ENCODE measurements at regions of chr2 and their contacts with region 1.

Region 1: GRCh38 chr2:71379088-71379487 is 47.5 kb downstream of the ZNF638 start:
- DNase-seq: peak; percentile 81
- ATAC-seq: peak; percentile 87
- H3K4me3 ChIP-seq: no peak overlapping the region
- H3K27ac ChIP-seq: no peak overlapping the region
- H3K4me1 ChIP-seq: peaks cover 7% of the 10 kb centered on the region
- H3K27me3 ChIP-seq: no peaks in the 10 kb centered on the region
- CTCF ChIP-seq: no peak
- POLR2A ChIP-seq: no peak
- RAD21 ChIP-seq: no peak

Region 2: DNA sequence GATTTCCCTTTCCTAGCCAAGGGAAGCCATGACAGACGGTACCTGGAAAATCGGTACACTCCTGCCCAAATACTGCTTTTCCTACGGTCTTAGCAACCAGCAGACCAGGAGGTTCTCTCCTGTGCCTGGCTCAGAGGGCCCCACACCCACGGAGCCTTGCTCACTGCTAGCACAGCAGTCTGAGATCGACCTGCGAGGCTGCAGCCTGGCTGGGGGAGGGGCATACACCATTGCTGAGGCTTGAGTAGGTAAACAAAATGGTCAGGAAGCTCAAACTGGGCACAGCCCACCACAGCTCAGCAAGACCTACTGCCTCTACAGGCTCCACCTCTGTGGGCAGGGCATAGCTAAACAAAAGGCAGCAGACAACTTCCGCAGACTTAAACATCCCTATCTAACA is 536.7 kb before region 1 on chr2:
- CTCF ChIA-PET with region 1: no interaction called
- POLR2A ChIA-PET with region 1: no interaction called
- dilution Hi-C with region 1: no loop called
- in situ Hi-C with region 1: no loop called
- intact Hi-C with region 1: no loop called
- DNase-seq: no peak
- ATAC-seq: no peak
- H3K4me3 ChIP-seq: no peak overlapping the region
- H3K27ac ChIP-seq: no peak overlapping the region
- H3K4me1 ChIP-seq: no peaks in the 10 kb centered on the region
- H3K27me3 ChIP-seq: no peaks in the 10 kb centered on the region; the same call in 1 of the 2 replicates
- CTCF ChIP-seq: no peak
- POLR2A ChIP-seq: no peak
- RAD21 ChIP-seq: no peak

Region 3: DNA sequence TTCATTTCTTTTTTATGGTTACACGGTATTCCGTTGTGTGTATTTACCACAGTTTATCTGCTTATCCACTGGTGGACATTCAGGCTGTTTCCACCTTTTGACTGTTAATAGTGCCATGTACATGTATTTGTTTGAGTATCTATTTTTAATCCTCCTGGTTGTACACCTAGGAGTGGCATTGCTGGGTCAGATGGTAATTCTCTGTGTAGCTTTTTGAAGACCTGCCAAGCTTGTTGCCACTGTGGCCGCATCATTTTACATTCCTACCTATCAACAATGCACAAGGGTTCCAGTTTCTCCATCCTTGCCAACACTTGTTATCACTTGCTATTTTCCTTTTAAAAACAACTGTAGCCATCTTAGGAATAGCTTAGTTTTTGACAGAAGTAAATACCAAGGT is 235.3 kb before region 1 on chr2:
- CTCF ChIA-PET with region 1: no interaction called
- POLR2A ChIA-PET with region 1: no interaction called
- dilution Hi-C with region 1: no loop called
- in situ Hi-C with region 1: no loop called
- intact Hi-C with region 1: no loop called
- DNase-seq: no peak
- ATAC-seq: no peak
- H3K4me3 ChIP-seq: no peak overlapping the region
- H3K27ac ChIP-seq: no peak overlapping the region
- H3K4me1 ChIP-seq: no peaks in the 10 kb centered on the region
- H3K27me3 ChIP-seq: no peaks in the 10 kb centered on the region
- CTCF ChIP-seq: no peak
- POLR2A ChIP-seq: no peak
- RAD21 ChIP-seq: no peak

Region 4: GRCh38 chr2:71282495-71282894 is 96.6 kb before region 1 on chr2:
- CTCF ChIA-PET with region 1: no interaction called
- POLR2A ChIA-PET with region 1: no interaction called
- dilution Hi-C with region 1: no loop called
- in situ Hi-C with region 1: no loop called
- intact Hi-C with region 1: no loop called
- DNase-seq: no peak
- ATAC-seq: no peak
- H3K4me3 ChIP-seq: no peak overlapping the region
- H3K27ac ChIP-seq: no peak overlapping the region
- H3K4me1 ChIP-seq: no peaks in the 10 kb centered on the region
- H3K27me3 ChIP-seq: peaks cover 17% of the 10 kb centered on the region
- CTCF ChIP-seq: no peak
- POLR2A ChIP-seq: no peak
- RAD21 ChIP-seq: no peak

Region 5: GRCh38 chr2:71340176-71340575 is 38.9 kb before region 1 on chr2:
- CTCF ChIA-PET with region 1: no interaction called
- POLR2A ChIA-PET with region 1: no interaction called
- dilution Hi-C with region 1: no loop called
- in situ Hi-C with region 1: no loop called
- intact Hi-C with region 1: loop called (anchors 5 kb)
- DNase-seq: no peak
- ATAC-seq: peak; percentile 35
- H3K4me3 ChIP-seq: no peak overlapping the region
- H3K27ac ChIP-seq: no peak overlapping the region
- H3K4me1 ChIP-seq: peaks cover 2% of the 10 kb centered on the region; the same call in 1 of the 2 replicates
- H3K27me3 ChIP-seq: no peaks in the 10 kb centered on the region
- CTCF ChIP-seq: no peak
- POLR2A ChIP-seq: no peak
- RAD21 ChIP-seq: no peak

Measured in IMR-90 (cell line).